Heart left ventricle (tissue), 16 donors: ENCODE measurements at regions of chr6 and their contacts with region 1.

Region 1: DNA sequence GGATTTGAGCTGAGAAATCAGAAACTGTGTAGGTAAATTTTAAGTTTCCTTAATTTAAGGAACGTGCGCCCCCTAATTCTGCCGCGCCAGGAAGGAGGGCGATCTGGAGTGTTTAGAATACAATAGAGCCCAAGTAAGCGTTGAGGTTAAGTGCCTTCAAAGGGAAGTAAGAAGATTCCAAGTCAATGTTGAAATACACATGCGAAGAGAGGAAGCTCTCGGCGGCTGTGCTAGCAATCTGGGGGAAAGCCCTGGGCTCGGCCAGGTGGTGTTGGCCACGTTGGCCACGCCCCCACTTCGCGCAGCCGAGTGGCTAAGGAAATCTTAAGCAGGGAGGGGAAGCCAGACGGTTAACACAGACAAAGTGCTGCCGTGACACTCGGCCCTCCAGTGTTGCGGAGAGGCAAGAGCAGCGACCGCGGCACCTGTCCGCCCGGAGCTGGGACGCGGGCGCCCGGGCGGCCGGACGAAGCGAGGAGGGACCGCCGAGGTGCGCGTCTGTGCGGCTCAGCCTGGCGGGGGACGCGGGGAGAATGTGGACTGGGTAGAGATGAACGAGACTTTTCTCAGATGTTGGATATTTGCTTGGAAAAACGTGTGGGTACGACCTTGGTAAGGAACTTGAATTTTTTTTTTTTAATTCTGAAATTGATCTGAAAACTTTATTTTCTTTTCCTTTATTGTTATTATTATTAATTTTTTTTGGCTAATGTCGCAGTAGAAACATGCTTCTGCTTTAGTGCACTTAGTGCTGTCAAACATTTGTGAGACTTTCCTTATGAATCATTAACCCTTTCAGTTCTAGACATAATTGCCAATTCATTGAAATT is at the start of gene PRDM1:
- DNase-seq: peak; percentile 66 to 89 (median 81)
- ATAC-seq: peak; percentile 49 to 82 (median 76)
- H3K4me3 ChIP-seq: peak within 1 kb of the TSS; percentile 12 to 66 (median 52)
- H3K27ac ChIP-seq: peak within 1 kb of the TSS; percentile 8 to 87 (median 58)
- H3K4me1 ChIP-seq: peaks cover 0 to 76% (median 7%) of the 10 kb centered on the region in 12 donors
- H3K27me3 ChIP-seq: peaks cover 0 to 62% (median 12%) of the 10 kb centered on the region in 9 donors
- CTCF ChIP-seq: peak in 6 of 12 donors; percentile 3 to 20 (median 14)
- POLR2A ChIP-seq: peak in 1 of 2 donors; percentile 38
- total RNA-seq, gene PRDM1: 1.0 to 10.8 (median 1.7) TPM

Region 2: GRCh38 chr6:105492706-105493673 is 593.2 kb before region 1 on chr6:
- intact Hi-C with region 1: loop called in 7 of 10 experiments (anchors 5 to 10 kb)
- DNase-seq: no peak
- ATAC-seq: peak in 3 of 4 donors; percentile 33 to 49 (median 45)
- H3K4me3 ChIP-seq: no peak overlapping the region
- H3K27ac ChIP-seq: peak overlapping the region in 10 of 12 donors; percentile 4 to 72 (median 48)
- H3K4me1 ChIP-seq: peaks cover 0 to 52% (median 35%) of the 10 kb centered on the region in 12 donors
- H3K27me3 ChIP-seq: no peaks in the 10 kb centered on the region
- CTCF ChIP-seq: no peak
- POLR2A ChIP-seq: no peak

Region 3: DNA sequence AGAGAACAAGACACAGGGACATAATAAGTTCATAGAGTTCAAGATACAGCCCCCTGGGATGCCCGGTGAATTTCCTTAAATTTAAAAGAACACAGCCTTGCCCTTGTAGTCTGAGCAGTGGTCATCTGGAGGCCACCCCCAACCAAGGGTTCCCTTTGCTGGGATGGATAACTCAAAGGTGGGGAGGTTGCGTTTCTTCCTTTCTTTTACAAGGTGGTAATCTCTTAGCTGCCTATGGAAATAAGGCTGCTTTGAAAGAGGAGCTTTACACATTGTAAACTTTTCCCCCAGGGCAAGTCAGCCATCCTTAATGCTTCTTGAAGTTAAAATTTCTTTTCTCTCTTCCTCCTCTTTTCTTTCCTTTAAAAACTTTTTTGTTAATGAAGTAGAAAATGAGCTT is 71.3 kb before region 1 on chr6:
- intact Hi-C with region 1: loop called in 1 of 10 experiments (anchors 5 kb)
- DNase-seq: no peak
- ATAC-seq: no peak
- H3K4me3 ChIP-seq: no peak overlapping the region
- H3K27ac ChIP-seq: no peak overlapping the region
- H3K4me1 ChIP-seq: no peaks in the 10 kb centered on the region
- H3K27me3 ChIP-seq: peaks cover 0 to 10% (median 0%) of the 10 kb centered on the region in 9 donors
- CTCF ChIP-seq: no peak
- POLR2A ChIP-seq: no peak

Region 4: DNA sequence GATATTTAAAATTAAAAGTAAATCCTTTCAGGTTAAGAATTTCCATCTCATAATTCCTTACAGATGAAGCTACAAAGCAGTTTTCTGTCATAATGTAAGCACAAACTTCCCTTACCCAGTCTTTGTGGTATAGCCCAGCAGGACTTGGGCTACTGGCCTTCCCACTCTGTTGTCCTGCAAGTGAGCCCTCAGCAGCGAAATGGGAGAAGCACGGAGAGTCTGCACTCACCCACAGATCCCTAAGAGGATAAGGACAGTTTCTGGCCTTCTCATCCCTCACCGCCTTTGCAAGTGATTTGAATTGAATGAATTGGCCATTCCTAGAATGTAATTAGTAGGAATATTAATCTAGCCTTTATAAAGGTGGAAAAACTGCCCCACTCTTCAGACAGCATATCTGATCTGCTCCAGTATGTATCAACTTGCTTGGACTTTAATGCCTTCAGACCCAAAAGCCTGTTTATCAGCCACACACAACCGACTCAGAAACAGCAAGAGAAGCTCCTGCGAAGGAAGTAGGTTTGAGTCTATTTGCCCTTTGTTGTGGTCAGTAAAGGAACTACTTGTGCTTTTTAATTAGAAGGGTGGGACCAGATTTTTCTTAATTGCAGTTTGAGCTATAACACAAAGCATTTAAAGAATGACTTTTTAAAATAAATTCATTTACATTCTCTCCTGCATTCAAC is 30.0 kb before region 1 on chr6:
- intact Hi-C with region 1: no loop called
- DNase-seq: no peak
- ATAC-seq: no peak
- H3K4me3 ChIP-seq: no peak overlapping the region
- H3K27ac ChIP-seq: no peak overlapping the region
- H3K4me1 ChIP-seq: peaks cover 0 to 7% (median 0%) of the 10 kb centered on the region in 12 donors
- H3K27me3 ChIP-seq: peaks cover 0 to 6% (median 0%) of the 10 kb centered on the region in 9 donors
- CTCF ChIP-seq: no peak
- POLR2A ChIP-seq: no peak